MCF 10A (cell line): ENCODE measurements at regions of chr3 and their contacts with region 1.

Region 1: GRCh38 chr3:171788546-171789351 is 21.5 kb downstream of the PLD1 start:
- DNase-seq: peak; percentile 88
- H3K4me3 Mint-ChIP-seq: no peak overlapping the region
- H3K27ac Mint-ChIP-seq: peak overlapping the region; percentile 61
- H3K4me1 Mint-ChIP-seq: peaks cover 27% of the 10 kb centered on the region
- H3K27me3 Mint-ChIP-seq: no peaks in the 10 kb centered on the region
- CTCF ChIP-seq: no peak

Region 2: DNA sequence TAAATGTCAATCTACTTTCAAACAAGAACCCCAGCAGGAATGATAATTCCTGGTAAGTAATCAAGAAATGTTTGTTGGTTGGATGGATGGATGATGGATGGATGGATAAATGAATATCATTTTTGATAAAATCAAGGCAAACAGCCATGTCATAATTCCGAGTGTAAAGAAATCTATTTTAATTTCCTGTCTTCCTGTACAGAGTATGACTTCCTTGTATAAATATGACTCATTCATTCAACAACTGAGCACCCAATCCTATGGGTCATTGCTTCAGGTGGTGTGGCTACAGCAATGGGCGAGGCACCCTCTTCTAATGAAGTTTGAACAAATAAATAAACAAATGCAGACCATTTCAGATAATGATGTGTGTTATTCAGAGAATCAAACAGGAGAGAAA is 527.3 kb before region 1 on chr3:
- CTCF ChIA-PET with region 1: no interaction called
- POLR2A ChIA-PET with region 1: no interaction called
- intact Hi-C with region 1: no loop called
- DNase-seq: peak; percentile 62
- H3K4me3 Mint-ChIP-seq: no peak overlapping the region
- H3K27ac Mint-ChIP-seq: peak overlapping the region; percentile 1
- H3K4me1 Mint-ChIP-seq: peaks cover 25% of the 10 kb centered on the region
- H3K27me3 Mint-ChIP-seq: no peaks in the 10 kb centered on the region
- CTCF ChIP-seq: no peak

Region 3: DNA sequence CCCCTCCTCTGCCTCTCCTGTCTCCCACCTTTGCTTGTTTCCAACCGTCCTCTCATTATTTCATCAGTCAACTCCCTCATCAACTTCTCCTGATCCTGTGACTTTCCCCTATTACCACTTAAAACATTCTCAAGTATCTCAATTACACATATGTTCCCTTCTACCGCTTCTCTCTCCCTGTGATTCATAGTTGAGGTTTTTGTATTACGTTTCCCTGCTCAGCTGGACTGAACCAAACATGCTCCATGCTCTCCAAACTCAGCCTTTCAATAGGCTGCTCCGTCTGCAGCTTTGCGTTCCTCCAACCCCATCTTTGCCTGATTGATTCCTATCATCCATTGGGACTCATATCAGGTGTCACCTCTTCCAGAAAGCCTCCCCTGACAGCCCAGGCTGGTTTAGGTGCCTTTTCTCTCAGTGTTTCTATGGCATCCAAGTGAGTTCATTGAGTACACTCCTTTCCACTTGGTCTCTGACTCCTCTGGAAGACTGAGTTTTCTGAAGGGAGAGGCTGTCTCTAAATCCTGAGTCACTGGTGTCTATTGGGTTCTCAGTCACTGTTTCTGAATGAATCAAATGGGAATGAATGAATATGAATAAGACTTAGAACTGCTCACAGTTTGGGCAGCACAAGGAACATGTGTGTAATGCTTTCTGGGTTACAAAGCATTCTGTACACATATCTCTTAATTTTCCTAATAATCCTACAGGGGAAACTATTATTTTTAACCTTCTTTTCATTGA is 34.9 kb before region 1 on chr3:
- CTCF ChIA-PET with region 1: no interaction called
- POLR2A ChIA-PET with region 1: no interaction called
- intact Hi-C with region 1: no loop called
- DNase-seq: peak; percentile 57
- H3K4me3 Mint-ChIP-seq: no peak overlapping the region
- H3K27ac Mint-ChIP-seq: no peak overlapping the region
- H3K4me1 Mint-ChIP-seq: no peaks in the 10 kb centered on the region
- H3K27me3 Mint-ChIP-seq: no peaks in the 10 kb centered on the region
- CTCF ChIP-seq: no peak

Region 4: DNA sequence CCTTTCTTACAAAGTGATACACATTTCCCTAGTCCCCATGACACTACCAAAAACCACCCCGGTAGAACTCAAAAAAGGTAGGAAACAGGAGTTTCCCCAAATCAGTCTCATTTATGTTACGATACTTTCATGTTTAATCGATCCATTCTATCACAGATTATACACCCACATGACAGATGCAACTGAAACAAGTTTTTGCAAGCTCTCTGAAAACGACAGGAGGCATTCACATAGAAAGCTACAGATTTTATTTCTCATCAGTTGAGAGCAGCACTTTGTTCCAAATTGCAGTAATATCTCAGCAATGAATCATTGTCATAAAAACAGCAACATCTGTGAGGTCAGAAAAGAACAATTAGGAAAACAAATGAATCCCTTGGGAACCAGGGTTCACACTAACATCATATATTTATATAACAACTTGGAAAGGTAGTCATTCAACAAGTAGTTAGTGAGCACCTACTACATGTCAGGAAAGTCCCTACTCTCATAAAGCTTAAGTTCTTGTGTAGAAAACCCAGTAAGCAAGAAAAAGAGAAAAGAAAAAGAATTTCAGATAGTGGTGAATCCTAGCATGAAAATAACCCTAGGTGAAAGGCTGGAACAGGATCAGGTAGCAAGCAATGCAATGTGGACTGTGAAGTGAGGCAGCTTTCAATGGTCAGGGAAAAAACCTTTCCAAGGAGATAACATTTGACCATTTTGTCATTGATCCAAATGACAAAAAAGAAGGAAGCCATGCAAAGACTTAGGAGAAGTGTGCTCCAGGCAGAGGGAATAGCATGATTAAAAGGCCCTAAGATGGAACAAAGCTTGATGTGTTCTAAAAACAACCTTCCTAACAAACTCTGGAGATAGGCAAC is 13.2 kb after region 1 on chr3:
- CTCF ChIA-PET with region 1: interaction called, 6 read pairs
- POLR2A ChIA-PET with region 1: interaction called, 45 read pairs
- intact Hi-C with region 1: no loop called
- DNase-seq: peak; percentile 85
- H3K4me3 Mint-ChIP-seq: peak overlapping the region; percentile 42
- H3K27ac Mint-ChIP-seq: peak overlapping the region; percentile 95
- H3K4me1 Mint-ChIP-seq: peaks cover 44% of the 10 kb centered on the region
- H3K27me3 Mint-ChIP-seq: no peaks in the 10 kb centered on the region
- CTCF ChIP-seq: no peak

Region 5: GRCh38 chr3:171809821-171810628 is 21.3 kb after region 1 on chr3 and contains the start of gene PLD1:
- CTCF ChIA-PET with region 1: interaction called, 3 read pairs
- POLR2A ChIA-PET with region 1: interaction called, 64 read pairs
- intact Hi-C with region 1: no loop called
- DNase-seq: peak; percentile 90
- H3K4me3 Mint-ChIP-seq: peak within 1 kb of the TSS; percentile 87
- H3K27ac Mint-ChIP-seq: peak within 1 kb of the TSS; percentile 98
- H3K4me1 Mint-ChIP-seq: peaks cover 38% of the 10 kb centered on the region
- H3K27me3 Mint-ChIP-seq: no peaks in the 10 kb centered on the region
- CTCF ChIP-seq: no peak
- total RNA-seq, gene PLD1: 8.0 and 14.8 TPM in 2 replicates

Region 6: GRCh38 chr3:171980578-171981270 is 192.0 kb after region 1 on chr3:
- CTCF ChIA-PET with region 1: no interaction called
- POLR2A ChIA-PET with region 1: no interaction called
- intact Hi-C with region 1: no loop called
- DNase-seq: no peak
- H3K4me3 Mint-ChIP-seq: no peak overlapping the region
- H3K27ac Mint-ChIP-seq: no peak overlapping the region
- H3K4me1 Mint-ChIP-seq: no peaks in the 10 kb centered on the region
- H3K27me3 Mint-ChIP-seq: no peaks in the 10 kb centered on the region
- CTCF ChIP-seq: no peak

Region 7: GRCh38 chr3:172029425-172030098 is 240.8 kb after region 1 on chr3:
- CTCF ChIA-PET with region 1: no interaction called
- POLR2A ChIA-PET with region 1: no interaction called
- intact Hi-C with region 1: no loop called
- DNase-seq: no peak
- H3K4me3 Mint-ChIP-seq: no peak overlapping the region
- H3K27ac Mint-ChIP-seq: no peak overlapping the region
- H3K4me1 Mint-ChIP-seq: no peaks in the 10 kb centered on the region
- H3K27me3 Mint-ChIP-seq: no peaks in the 10 kb centered on the region
- CTCF ChIP-seq: no peak